ENCODE measurements at regions of chr1 and their contacts with region 1.

Region 1: GRCh38 chr1:12454406-12455391 is 163.3 kb downstream of the DHRS3 start:
- DNase-seq: peak; percentile 63
- H3K4me3 ChIP-seq: no peak overlapping the region
- H3K27me3 ChIP-seq: no peaks in the 10 kb centered on the region
- CTCF ChIP-seq: peak; percentile 23; the same call in 1 of the 2 replicates

Region 2: GRCh38 chr1:12677565-12677964 is 222.9 kb after region 1 on chr1:
- CTCF ChIA-PET with region 1: no interaction called
- POLR2A ChIA-PET with region 1: no interaction called
- DNase-seq: no peak
- H3K4me3 ChIP-seq: no peak overlapping the region
- H3K27me3 ChIP-seq: no peaks in the 10 kb centered on the region
- CTCF ChIP-seq: no peak

Region 3: DNA sequence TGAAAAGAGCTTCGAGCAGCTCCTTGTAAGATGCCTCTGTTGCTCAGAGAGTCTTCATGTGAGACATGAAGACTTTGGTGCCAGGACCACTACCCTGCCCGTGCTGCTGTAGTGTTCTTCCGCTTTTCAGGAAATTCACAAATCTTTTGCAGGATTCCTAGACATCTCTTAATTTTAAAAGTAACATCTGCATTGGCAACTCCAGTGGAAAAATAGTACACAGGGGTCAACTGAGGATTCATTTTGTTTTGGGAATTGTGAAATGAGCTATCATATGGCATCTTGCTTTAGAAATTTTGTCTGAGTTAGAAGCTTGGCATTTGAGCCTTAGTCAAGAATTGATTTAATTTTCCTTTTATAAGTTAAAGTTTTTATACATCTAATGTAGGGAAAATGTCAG is 1252.5 kb after region 1 on chr1:
- CTCF ChIA-PET with region 1: no interaction called
- POLR2A ChIA-PET with region 1: interaction called, 10 read pairs
- DNase-seq: peak; percentile 13
- H3K4me3 ChIP-seq: no peak overlapping the region
- H3K27me3 ChIP-seq: no peaks in the 10 kb centered on the region
- CTCF ChIP-seq: no peak